Sigmoid colon (tissue), 7 donors: ENCODE measurements at regions of chr10 and their contacts with region 1.

Region 1: GRCh38 chr10:55263327-55263726 is 462.3 kb upstream of the PCDH15 start:
- DNase-seq: no peak
- H3K4me3 ChIP-seq: no peak overlapping the region
- H3K27ac ChIP-seq: no peak overlapping the region
- H3K4me1 ChIP-seq: no peaks in the 10 kb centered on the region
- H3K27me3 ChIP-seq: no peaks in the 10 kb centered on the region
- CTCF ChIP-seq: no peak
- EP300 ChIP-seq: no peak
- POLR2A ChIP-seq: no peak

Region 2: GRCh38 chr10:53601260-53601875 is 1662.0 kb before region 1 on chr10:
- intact Hi-C with region 1: loop called (anchors 5 kb)
- DNase-seq: no peak
- H3K4me3 ChIP-seq: no peak overlapping the region
- H3K27ac ChIP-seq: no peak overlapping the region
- H3K4me1 ChIP-seq: no peaks in the 10 kb centered on the region
- H3K27me3 ChIP-seq: no peaks in the 10 kb centered on the region
- CTCF ChIP-seq: peak; percentile 17 to 73 (median 40)
- EP300 ChIP-seq: no peak
- POLR2A ChIP-seq: no peak